Left cardiac atrium (tissue), 4 donors: ENCODE measurements at regions of chr1 and their contacts with region 1.

Region 1: GRCh38 chr1:216750012-216750627 is 26.9 kb upstream of the ESRRG start:
- DNase-seq: no peak
- ATAC-seq: peak; percentile 86

Region 2: GRCh38 chr1:216562383-216562782 is 187.7 kb before region 1 on chr1:
- intact Hi-C with region 1: no loop called
- DNase-seq: no peak
- ATAC-seq: no peak

Region 3: DNA sequence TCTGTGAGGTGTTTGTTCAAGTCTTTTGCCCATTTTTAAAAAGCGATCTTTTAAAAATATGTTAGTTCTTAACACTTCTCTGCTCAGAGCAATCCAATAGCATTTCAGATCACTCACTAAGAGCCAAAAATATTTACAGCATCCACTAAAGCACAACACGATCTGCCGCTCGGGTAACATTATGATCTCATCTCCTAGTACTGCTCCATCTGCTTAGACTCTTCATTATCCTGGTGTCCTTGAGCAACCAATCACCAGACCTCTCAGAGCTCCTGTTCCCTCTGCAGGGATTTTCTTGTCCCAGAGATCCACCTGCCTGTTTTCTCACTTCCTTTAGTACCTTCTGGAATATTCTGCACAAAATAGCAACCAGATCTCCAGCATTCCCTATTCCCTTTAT is 208.4 kb after region 1 on chr1:
- intact Hi-C with region 1: loop called in 1 of 2 experiments (anchors 5 kb)
- DNase-seq: no peak
- ATAC-seq: peak; percentile 37 to 44

Region 4: GRCh38 chr1:217078078-217078690 is 328.1 kb after region 1 on chr1:
- intact Hi-C with region 1: loop called in 1 of 2 experiments (anchors 10 kb)
- DNase-seq: no peak
- ATAC-seq: peak; percentile 66 to 75

Region 5: GRCh38 chr1:217230412-217230811 is 480.3 kb after region 1 on chr1:
- intact Hi-C with region 1: loop called in 1 of 2 experiments (anchors 5 kb)
- DNase-seq: no peak
- ATAC-seq: peak in 1 of 2 donors; percentile 53